ENCODE measurements at regions of chr10 and their contacts with region 1.

Region 1: GRCh38 chr10:79347226-79347893 is at the start of gene PPIF:
- DNase-seq: no peak
- H3K4me3 ChIP-seq: peak within 1 kb of the TSS; percentile 86
- CTCF ChIP-seq: peak; percentile 95

Region 2: DNA sequence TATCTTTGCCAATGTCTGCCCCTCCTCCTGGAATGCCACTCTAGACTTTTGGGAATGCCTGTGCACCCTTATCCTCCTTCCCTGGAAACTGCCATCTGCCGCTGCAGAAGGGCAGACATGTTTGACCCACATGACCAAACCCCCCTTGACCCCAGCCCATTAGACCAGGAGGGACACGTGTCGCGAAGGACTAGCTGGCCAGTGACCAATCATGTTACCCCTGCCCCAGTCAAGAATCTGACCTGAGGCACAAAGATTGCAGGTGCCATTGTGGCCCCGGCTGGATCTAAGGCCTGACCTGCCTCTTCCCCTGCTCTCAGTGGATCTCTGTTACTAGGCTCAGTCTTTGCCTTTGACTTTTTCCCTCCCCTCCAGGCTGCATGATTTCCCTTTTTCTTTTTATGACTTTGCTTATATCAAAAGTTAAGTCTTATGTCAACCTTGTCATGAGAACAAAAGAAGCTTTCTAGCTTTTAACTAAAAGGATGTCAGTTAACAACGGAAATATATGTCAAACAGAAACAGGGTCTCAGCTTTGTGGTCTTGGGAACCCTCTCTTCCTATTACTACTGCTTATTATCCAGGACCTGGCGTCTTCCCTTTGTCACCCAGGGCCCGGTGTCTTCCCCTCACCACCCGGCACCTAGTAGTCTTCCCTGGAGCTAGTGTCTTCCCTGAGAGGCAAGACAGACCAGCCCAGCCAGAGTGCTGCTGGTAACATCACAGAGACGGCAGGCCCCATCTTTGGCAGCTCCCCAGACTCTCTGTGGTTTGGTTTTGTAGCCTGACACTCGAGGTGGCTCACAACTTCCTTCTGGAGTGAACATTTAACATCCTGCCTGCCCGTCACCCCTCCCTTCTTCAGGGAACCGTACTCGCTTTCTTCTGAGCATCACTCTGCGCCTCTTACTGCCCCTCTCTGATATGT is 24.5 kb before region 1 on chr10:
- CTCF ChIA-PET with region 1: interaction called, 30 read pairs
- POLR2A ChIA-PET with region 1: no interaction called
- DNase-seq: no peak
- H3K4me3 ChIP-seq: no peak overlapping the region
- CTCF ChIP-seq: no peak

Region 3: DNA sequence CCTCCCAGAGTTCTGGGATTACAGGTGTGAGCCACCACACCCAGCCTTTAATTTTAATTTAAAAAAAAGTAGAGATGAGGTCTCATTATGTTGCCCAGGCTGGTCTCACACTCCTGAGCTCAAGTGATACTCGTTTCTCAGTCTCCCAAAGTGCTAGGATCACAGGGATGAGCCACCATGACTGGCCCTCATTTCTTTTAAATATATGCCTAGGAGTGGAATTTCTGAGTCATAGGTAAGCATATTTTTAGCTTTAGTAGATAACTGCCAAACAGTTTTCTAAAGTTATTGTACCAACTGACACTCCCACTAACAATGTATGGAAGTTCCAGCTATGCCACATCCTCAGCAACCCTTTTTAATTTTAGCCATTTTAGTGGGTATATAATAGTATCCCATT is 13.9 kb before region 1 on chr10:
- CTCF ChIA-PET with region 1: interaction called, 111 read pairs
- POLR2A ChIA-PET with region 1: interaction called, 12 read pairs
- DNase-seq: peak; percentile 54
- H3K4me3 ChIP-seq: no peak overlapping the region
- CTCF ChIP-seq: no peak

Region 4: GRCh38 chr10:79367426-79368189 is 20.2 kb after region 1 on chr10:
- CTCF ChIA-PET with region 1: interaction called, 25 read pairs
- POLR2A ChIA-PET with region 1: no interaction called
- DNase-seq: no peak
- H3K4me3 ChIP-seq: no peak overlapping the region
- CTCF ChIP-seq: no peak